ENCODE measurements at regions of chr2 and their contacts with region 1.

Region 1: GRCh38 chr2:217988014-217988839 is 14.6 kb downstream of the TNS1 start:
- DNase-seq: peak; percentile 95 to 96
- H3K4me3 ChIP-seq: peak overlapping the region in 3 of 4 donors; percentile 4 to 8 (median 6)
- H3K27ac ChIP-seq: peak overlapping the region; percentile 57 to 82 (median 79)
- H3K4me1 ChIP-seq: peaks cover 16 to 29% (median 21%) of the 10 kb centered on the region in 4 donors
- H3K27me3 ChIP-seq: no peaks in the 10 kb centered on the region
- CTCF ChIP-seq: peak in 6 of 7 experiments; percentile 58 to 93 (median 86)
- EP300 ChIP-seq: no peak
- POLR2A ChIP-seq: no peak

Region 2: DNA sequence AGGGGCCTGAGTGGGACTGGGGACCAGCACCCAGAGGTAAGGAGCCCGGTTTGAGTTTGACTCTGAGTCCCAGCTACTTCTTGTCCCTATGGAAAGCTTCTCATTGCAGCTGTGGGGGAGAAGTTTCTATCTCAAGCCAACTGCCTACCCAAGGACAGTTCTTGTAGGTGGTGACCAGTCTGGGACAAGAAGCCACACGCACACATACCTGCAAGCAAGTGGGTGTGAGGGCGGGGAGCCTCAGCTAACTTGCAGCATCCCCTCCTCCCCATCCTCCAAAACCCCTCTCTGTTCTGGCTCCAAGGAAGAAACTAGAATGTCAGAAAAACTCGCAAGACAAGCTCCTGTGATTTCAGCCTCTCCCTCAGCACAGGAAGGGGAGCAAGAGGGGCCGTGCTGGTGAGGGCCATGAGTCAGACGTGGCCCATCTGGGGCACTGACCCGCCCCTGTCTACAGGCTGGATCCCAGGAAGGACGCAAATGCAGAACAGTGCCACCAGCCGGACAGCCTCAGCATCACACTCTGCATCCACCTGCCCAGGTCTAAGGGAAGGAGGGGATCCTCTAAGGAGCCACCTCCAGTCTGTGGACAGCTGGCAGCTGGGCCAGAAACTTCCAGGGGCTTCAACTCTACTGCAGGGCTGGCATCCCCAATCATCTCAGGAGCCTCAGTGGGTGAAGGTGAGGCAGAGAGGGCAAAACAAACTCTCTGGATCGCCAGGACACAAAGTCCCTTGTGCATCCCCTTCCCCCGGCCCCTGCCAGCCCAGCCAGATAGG is 88.8 kb before region 1 on chr2:
- intact Hi-C with region 1: loop called (anchors 10 kb)
- DNase-seq: peak; percentile 77 to 81
- H3K4me3 ChIP-seq: peak overlapping the region in 1 of 4 donors; percentile 19
- H3K27ac ChIP-seq: peak overlapping the region; percentile 87 to 92 (median 92)
- H3K4me1 ChIP-seq: peaks cover 75 to 95% (median 84%) of the 10 kb centered on the region in 4 donors
- H3K27me3 ChIP-seq: no peaks in the 10 kb centered on the region
- CTCF ChIP-seq: peak in 5 of 7 experiments; percentile 50 to 73 (median 60)
- EP300 ChIP-seq: no peak
- POLR2A ChIP-seq: no peak

Region 3: GRCh38 chr2:218216674-218217359 is 228.6 kb after region 1 on chr2 and contains the start of gene ARPC2:
- intact Hi-C with region 1: no loop called
- DNase-seq: peak; percentile 96 to 99
- H3K4me3 ChIP-seq: peak within 1 kb of the TSS; percentile 71 to 96 (median 94)
- H3K27ac ChIP-seq: peak within 1 kb of the TSS; percentile 93 to 99 (median 98)
- H3K4me1 ChIP-seq: peaks cover 33 to 49% (median 45%) of the 10 kb centered on the region in 4 donors
- H3K27me3 ChIP-seq: no peaks in the 10 kb centered on the region
- CTCF ChIP-seq: peak in 4 of 7 experiments; percentile 10 to 33 (median 26)
- EP300 ChIP-seq: no peak
- POLR2A ChIP-seq: peak in 2 of 4 donors; percentile 30 to 90
- total RNA-seq, gene ARPC2: 92.1 to 456 (median 234) TPM

Measured in stomach (tissue), 19 donors.